PC-3 (cell line): ENCODE measurements at regions of chr5 and their contacts with region 1.

Region 1: GRCh38 chr5:42656651-42657015 is 100.0 kb upstream of the CCDC152 start:
- DNase-seq: peak; percentile 58
- ATAC-seq: peak; percentile 80
- H3K4me3 ChIP-seq: peak overlapping the region; percentile 44
- H3K27ac ChIP-seq: no peak overlapping the region
- H3K4me1 ChIP-seq: peaks cover 7% of the 10 kb centered on the region; the same call in 1 of the 2 replicates
- H3K27me3 ChIP-seq: no peaks in the 10 kb centered on the region
- CTCF ChIP-seq: peak; percentile 76

Region 2: GRCh38 chr5:41856644-41857491 is 799.8 kb before region 1 on chr5:
- CTCF ChIA-PET with region 1: interaction called, 5 read pairs
- POLR2A ChIA-PET with region 1: no interaction called
- intact Hi-C with region 1: loop called (anchors 2 kb)
- DNase-seq: peak; percentile 93
- ATAC-seq: peak; percentile 94
- H3K4me3 ChIP-seq: no peak overlapping the region
- H3K27ac ChIP-seq: no peak overlapping the region
- H3K4me1 ChIP-seq: no peaks in the 10 kb centered on the region
- H3K27me3 ChIP-seq: no peaks in the 10 kb centered on the region
- CTCF ChIP-seq: peak; percentile 95

Region 3: DNA sequence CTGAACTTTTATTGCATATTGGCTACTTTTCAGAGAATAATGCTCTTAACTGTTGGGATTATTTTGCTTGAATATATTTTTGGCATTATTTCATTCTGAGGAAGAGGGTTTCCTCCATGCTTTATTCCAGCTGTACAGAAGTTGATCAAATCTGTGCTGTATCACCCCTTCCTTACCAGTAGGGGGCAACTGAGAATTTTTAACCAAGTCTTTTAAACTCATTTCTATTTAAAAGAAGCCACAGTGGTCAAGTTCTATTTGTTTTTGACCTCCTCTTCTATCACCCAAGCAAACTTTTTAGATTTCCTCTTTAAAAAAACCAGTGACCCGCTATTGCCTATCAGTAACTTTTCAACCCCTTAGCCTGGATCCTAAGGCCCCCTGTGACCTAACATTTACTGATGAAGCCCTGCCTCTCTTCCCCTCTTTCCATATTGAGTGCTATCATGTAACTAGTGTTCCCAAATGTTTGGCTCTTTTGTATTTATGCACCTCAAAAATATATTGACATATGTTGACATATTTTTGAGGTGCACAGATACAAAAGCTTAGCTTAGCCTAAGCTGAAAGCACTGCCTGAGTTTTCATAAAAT is 651.0 kb before region 1 on chr5:
- CTCF ChIA-PET with region 1: no interaction called
- POLR2A ChIA-PET with region 1: no interaction called
- intact Hi-C with region 1: loop called (anchors 1 kb)
- DNase-seq: peak; percentile 62
- ATAC-seq: peak; percentile 49
- H3K4me3 ChIP-seq: no peak overlapping the region
- H3K27ac ChIP-seq: no peak overlapping the region
- H3K4me1 ChIP-seq: no peaks in the 10 kb centered on the region
- H3K27me3 ChIP-seq: no peaks in the 10 kb centered on the region
- CTCF ChIP-seq: peak; percentile 88

Region 4: DNA sequence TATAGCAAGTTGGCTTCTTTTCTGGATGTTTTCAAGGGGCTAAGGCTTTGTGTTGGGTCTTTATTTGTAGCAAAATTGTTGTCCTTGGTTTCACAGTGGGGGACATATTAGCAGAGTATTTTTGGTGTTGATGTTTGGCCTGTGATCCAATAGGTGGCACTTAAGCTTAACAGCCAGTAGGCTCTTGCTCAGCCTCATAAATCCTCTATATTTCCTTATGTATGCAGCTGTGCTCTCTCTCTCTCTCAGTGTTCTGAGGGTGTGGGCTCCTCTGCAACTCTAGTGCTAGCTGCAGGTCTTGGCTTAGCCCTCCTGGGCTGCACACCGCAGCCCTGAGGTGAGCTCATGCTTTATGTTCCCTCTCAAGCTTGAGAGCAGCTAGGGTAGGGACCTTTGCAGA is 428.4 kb before region 1 on chr5:
- CTCF ChIA-PET with region 1: no interaction called
- POLR2A ChIA-PET with region 1: no interaction called
- intact Hi-C with region 1: loop called (anchors 1 kb)
- DNase-seq: peak; percentile 69
- ATAC-seq: peak; percentile 98
- H3K4me3 ChIP-seq: no peak overlapping the region
- H3K27ac ChIP-seq: no peak overlapping the region
- H3K4me1 ChIP-seq: peaks cover 5% of the 10 kb centered on the region; the same call in 1 of the 2 replicates
- H3K27me3 ChIP-seq: no peaks in the 10 kb centered on the region
- CTCF ChIP-seq: peak; percentile 78

Region 5: GRCh38 chr5:42306287-42306686 is 350.3 kb before region 1 on chr5:
- CTCF ChIA-PET with region 1: no interaction called
- POLR2A ChIA-PET with region 1: no interaction called
- intact Hi-C with region 1: no loop called
- DNase-seq: no peak
- ATAC-seq: no peak
- H3K4me3 ChIP-seq: no peak overlapping the region
- H3K27ac ChIP-seq: no peak overlapping the region
- H3K4me1 ChIP-seq: peaks cover 19% of the 10 kb centered on the region
- H3K27me3 ChIP-seq: no peaks in the 10 kb centered on the region
- CTCF ChIP-seq: no peak

Region 6: GRCh38 chr5:42495914-42496313 is 160.7 kb before region 1 on chr5:
- CTCF ChIA-PET with region 1: no interaction called
- POLR2A ChIA-PET with region 1: no interaction called
- intact Hi-C with region 1: no loop called
- DNase-seq: peak; percentile 40
- ATAC-seq: no peak
- H3K4me3 ChIP-seq: no peak overlapping the region
- H3K27ac ChIP-seq: no peak overlapping the region
- H3K4me1 ChIP-seq: peaks cover 21% of the 10 kb centered on the region
- H3K27me3 ChIP-seq: no peaks in the 10 kb centered on the region
- CTCF ChIP-seq: no peak

Region 7: DNA sequence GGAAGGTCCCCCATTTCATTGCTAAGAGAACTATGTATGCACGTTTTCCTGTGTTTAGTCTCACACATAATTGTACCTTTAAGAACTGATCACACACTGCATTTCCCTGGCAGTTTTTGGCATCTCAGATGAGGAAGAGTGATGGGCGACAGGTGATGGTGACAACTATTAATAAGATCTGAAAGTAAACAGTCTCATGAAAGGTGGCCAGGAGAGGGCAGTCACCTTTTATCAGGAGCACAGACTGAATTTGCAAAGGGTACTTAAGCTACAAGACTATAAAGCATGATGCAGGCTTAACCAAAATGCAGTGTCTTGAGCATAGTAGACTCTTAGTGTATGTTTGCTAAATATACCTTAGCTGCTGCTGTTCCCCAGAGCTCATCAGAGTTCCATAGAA is 141.9 kb before region 1 on chr5:
- CTCF ChIA-PET with region 1: interaction called, 6 read pairs
- POLR2A ChIA-PET with region 1: no interaction called
- intact Hi-C with region 1: loop called (anchors 5 kb)
- DNase-seq: peak; percentile 37
- ATAC-seq: peak; percentile 59
- H3K4me3 ChIP-seq: no peak overlapping the region
- H3K27ac ChIP-seq: no peak overlapping the region
- H3K4me1 ChIP-seq: no peaks in the 10 kb centered on the region
- H3K27me3 ChIP-seq: no peaks in the 10 kb centered on the region
- CTCF ChIP-seq: peak; percentile 61

Region 8: DNA sequence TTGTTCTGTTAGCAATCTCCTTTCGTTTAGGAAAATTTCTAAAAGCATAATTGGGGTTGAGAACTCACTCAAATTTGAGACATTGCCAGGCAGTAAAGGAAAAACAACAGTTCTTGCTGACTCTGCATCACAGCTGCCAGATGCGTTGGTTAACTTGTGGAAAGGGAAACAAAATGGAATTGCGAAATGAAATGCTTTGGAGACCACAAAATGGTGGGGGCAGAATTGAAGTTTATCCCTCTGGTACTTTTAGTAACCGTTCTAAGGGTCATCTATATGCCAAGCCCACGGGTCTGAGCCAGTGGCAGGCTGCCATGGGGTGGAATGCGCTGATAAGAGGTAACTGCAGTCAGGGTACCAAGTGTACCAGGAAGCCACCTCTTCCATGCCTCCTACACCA is 183.6 kb after region 1 on chr5:
- CTCF ChIA-PET with region 1: no interaction called
- POLR2A ChIA-PET with region 1: no interaction called
- intact Hi-C with region 1: no loop called
- DNase-seq: no peak
- ATAC-seq: no peak
- H3K4me3 ChIP-seq: no peak overlapping the region
- H3K27ac ChIP-seq: no peak overlapping the region
- H3K4me1 ChIP-seq: no peaks in the 10 kb centered on the region
- H3K27me3 ChIP-seq: no peaks in the 10 kb centered on the region
- CTCF ChIP-seq: no peak

Region 9: DNA sequence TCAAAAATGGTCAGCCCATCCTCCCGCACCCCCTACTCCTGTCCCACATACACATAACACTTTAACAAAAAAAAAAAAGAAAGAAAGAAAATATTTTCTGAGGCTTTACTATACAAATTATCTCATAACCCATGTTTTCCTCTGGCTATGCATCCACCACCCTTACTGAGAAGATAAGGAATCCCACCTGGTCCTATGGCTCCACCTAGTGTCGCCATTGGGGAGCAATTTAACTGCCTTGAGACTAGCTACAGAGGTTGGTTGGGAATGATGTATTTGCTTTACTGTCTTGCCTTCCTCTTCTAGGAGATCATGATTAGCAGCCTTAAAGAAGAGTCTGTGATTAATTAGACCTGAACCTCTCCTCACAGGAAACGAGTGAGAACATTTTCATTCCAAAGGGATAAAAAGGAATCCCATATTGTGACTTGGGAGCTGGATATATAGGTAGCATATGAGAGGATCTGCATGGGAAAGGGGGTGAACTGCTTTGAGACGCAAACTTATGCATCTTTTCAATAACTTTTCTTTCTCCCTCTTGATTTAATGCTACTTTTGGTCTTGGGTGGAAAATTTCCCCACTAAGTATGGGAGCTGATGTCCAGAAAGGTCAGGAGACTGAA is 232.8 kb after region 1 on chr5:
- CTCF ChIA-PET with region 1: interaction called, 4 read pairs
- POLR2A ChIA-PET with region 1: no interaction called
- intact Hi-C with region 1: loop called (anchors 5 kb)
- DNase-seq: peak; percentile 96
- ATAC-seq: peak; percentile 89
- H3K4me3 ChIP-seq: no peak overlapping the region
- H3K27ac ChIP-seq: no peak overlapping the region
- H3K4me1 ChIP-seq: peaks cover 20% of the 10 kb centered on the region
- H3K27me3 ChIP-seq: no peaks in the 10 kb centered on the region
- CTCF ChIP-seq: peak; percentile 97

Region 10: DNA sequence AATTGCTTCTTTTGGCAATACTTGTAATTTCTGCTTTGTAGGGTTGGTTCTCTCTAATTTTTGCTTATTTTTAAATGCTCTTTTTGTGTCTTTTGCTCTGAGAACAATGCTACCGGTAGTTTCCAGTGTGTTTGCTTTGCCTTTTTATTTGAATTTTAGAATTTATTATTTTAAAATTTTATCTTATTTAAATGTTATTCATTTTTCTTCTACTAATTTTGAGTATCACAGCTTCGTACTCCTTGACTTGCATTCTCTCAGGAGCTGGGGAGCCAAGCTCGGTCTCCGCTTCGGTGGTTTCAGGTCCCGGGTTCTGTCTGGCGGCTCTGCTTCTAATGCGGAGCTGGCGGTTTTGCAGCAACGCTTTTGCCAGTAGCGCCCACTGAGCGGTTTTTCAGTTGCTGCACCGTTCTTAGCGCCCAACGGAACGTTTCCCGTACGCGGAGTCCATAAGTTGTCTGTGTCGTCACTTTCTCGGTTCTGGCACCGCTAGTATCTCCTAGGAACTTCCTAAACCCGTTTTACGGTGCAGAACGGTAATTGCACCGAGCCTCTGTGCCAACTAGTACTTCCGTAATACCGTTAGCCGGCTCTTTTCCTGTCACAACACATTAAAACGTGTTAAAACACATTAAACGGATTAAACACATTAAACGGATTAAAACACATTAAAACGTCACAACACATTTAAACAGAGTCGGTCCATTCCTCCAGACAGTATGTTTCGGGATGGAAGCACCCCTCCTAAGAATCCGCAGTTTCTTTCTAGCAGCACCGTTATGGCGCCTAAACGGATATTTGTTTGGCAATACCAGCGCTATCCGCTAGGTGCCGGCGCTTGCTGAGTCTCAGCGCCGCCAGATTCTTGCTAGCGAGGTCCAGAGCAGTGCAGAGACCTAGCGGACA is 337.9 kb after region 1 on chr5:
- CTCF ChIA-PET with region 1: no interaction called
- POLR2A ChIA-PET with region 1: no interaction called
- intact Hi-C with region 1: no loop called
- DNase-seq: no peak
- ATAC-seq: no peak
- H3K4me3 ChIP-seq: no peak overlapping the region
- H3K27ac ChIP-seq: no peak overlapping the region
- H3K4me1 ChIP-seq: no peaks in the 10 kb centered on the region
- H3K27me3 ChIP-seq: no peaks in the 10 kb centered on the region
- CTCF ChIP-seq: no peak